HepG2 (cell line): ENCODE measurements at regions of chr14 and their contacts with region 1.

Region 1: DNA sequence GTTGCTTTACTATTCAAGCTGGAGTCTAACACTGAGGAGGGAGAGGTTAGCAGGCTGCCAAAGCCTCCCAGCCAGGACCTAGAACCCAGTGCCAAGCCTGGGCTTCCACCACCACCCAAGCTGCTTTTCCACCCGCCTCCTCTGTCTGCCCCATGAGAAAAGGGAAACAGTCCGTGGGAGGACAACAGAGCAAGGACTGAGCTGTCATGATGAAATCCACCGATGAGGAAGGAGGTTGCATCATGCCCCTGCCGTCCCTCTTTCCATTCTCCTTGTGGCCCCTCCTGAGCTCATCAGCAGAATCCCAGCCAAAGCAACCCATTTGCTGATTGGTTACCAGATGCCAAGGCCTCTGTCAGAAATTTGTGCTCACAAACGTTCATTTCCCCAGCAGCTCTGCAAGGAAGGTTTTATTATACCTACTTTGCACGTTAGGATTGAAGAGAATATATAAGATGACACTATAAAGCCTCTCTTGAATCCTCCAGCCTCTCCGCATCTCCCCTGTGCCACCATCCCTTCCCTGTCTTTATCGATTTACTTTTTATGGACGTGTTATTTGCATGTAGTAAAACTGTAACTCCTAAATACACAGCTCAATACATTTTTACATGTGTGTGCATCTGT is 6.3 kb upstream of the SERPINA1 start:
- DNase-seq: peak; percentile 74
- ATAC-seq: peak; percentile 6; the same call in 2 of the 3 replicates
- H3K4me3 ChIP-seq: peak overlapping the region; percentile 28 to 67 (median 35)
- H3K27ac ChIP-seq: peak overlapping the region; percentile 87
- H3K4me1 ChIP-seq: peaks cover 100% of the 10 kb centered on the region
- H3K27me3 ChIP-seq: no peaks in the 10 kb centered on the region
- CTCF ChIP-seq: no peak
- EP300 ChIP-seq: peak in 1 of 2 experiments; percentile 71; a peak in 2 of 4 replicates
- POLR2A ChIP-seq: peak in 1 of 2 experiments; percentile 55; a peak in 1 of 4 replicates
- RAD21 ChIP-seq: no peak

Region 2: GRCh38 chr14:93970549-93970946 is 424.1 kb before region 1 on chr14:
- CTCF ChIA-PET with region 1: no interaction called
- POLR2A ChIA-PET with region 1: no interaction called
- in situ Hi-C with region 1: no loop called
- intact Hi-C with region 1: no loop called
- DNase-seq: peak; percentile 52
- ATAC-seq: peak; percentile 90
- H3K4me3 ChIP-seq: 0 out of 6 replicates have a peak overlapping the region, but pooled peaks of 2 of the 3 experiments have one; percentile 9 to 57
- H3K27ac ChIP-seq: no peak overlapping the region
- H3K4me1 ChIP-seq: peaks cover 44% of the 10 kb centered on the region
- H3K27me3 ChIP-seq: peaks cover 7 to 40% of the 10 kb centered on the region in 2 experiments
- CTCF ChIP-seq: peak; percentile 88
- EP300 ChIP-seq: no peak
- POLR2A ChIP-seq: no peak
- RAD21 ChIP-seq: peak; percentile 85

Region 3: DNA sequence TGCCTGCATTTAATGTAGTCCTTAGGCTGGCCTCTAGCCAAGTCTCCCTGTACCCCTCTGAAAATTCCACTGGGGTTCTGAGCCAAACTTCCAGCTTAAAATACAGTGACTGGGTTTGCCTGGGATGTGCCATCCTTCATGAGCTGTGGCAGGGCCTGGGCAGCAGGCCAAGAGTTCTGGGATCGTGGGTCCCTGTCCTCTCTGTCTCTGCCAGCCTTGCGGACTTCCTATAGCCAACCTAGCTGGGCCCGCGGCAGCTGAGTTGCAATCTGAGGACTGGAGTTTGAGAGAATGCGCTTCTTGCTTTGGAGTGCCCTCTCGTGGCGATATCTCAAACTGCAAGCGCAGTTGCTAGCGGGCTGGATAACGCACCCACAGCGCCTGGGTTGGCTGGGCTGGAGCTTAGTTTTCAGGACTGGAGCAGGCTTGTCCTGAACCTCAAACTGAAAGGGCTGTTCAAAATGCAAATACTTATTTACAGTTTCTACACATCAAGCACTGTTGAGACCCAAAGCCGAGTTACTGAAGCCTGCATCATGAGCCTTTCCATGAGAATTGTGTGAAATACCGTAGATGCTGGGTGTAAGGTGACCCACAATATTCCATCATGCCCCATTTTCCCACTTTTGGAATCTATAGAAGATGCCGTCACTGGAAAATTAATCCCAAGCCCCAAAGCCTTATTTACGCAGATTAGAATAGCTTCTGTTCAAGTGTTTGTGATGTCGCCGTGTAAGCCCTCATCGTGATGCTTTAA is 257.9 kb before region 1 on chr14:
- CTCF ChIA-PET with region 1: no interaction called
- POLR2A ChIA-PET with region 1: no interaction called
- in situ Hi-C with region 1: no loop called
- intact Hi-C with region 1: no loop called
- DNase-seq: peak; percentile 80
- ATAC-seq: peak; percentile 93
- H3K4me3 ChIP-seq: peak overlapping the region in 2 of 3 experiments; percentile 19 to 48; a peak in 3 of 6 replicates
- H3K27ac ChIP-seq: no peak overlapping the region
- H3K4me1 ChIP-seq: peaks cover 27% of the 10 kb centered on the region
- H3K27me3 ChIP-seq: peaks cover 2 to 25% of the 10 kb centered on the region in 2 experiments; a peak in 4 of 5 replicates
- CTCF ChIP-seq: peak; percentile 98
- EP300 ChIP-seq: no peak
- POLR2A ChIP-seq: no peak
- RAD21 ChIP-seq: peak; percentile 95

Region 4: DNA sequence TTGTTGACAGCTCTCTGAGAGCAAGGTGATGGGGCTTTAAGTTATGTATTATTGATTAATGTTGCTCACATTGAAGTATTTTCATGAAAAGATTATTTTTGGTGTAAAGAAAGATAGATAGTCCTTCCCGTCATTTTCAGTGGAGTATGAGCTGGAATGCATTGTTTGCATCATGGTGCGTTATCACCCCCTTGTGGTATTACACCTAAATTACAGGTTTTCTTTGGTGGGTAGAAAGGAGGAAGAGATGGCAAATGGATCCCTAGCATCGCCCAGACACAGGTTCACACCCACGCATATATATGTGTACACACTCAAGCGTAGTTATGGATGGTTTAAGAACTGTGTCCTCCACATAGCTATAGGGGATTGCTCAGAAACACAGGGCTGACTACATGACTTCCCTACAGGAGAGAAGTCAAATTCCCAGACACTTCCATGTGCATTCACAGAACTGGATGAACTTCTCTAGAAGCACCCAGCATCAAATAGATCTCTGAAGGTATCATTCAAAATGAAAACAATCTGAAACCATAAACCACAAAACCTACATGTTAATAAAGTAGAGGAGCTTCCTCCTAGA is 87.2 kb before region 1 on chr14:
- CTCF ChIA-PET with region 1: no interaction called
- POLR2A ChIA-PET with region 1: no interaction called
- in situ Hi-C with region 1: no loop called
- intact Hi-C with region 1: no loop called
- DNase-seq: peak; percentile 50
- ATAC-seq: peak; percentile 65
- H3K4me3 ChIP-seq: no peak overlapping the region
- H3K27ac ChIP-seq: no peak overlapping the region
- H3K4me1 ChIP-seq: peaks cover 18% of the 10 kb centered on the region
- H3K27me3 ChIP-seq: no peaks in the 10 kb centered on the region
- CTCF ChIP-seq: peak; percentile 88
- EP300 ChIP-seq: no peak
- POLR2A ChIP-seq: no peak
- RAD21 ChIP-seq: peak; percentile 80

Region 5: DNA sequence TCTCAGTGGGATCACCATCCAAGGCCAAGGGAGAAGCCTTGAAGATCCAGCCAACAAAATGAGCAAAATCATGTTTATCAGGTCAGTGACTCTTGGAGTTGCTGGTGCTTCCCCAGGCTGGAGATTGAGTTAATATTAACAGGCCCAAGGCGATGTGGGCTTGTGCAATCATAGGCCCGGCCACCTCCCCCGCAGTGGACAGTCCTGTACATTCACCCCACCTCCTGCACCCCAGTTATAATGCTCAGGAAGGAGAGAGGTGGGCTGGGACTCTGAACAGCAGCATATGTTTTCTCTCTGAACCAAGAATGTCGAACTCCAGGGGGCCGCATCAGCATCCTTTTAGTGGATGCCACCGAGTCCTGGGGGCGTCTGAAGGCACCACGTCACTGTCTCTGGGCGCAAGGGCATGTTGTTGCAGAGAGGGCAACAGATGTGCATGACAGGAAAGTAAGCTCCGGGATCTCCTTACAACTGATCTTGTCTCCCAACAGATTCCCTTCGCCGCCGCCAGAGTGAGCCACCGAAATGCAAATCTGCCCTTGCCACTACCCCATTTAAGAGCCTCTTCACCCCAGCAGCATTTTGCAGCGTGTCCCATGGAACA is 39.4 kb before region 1 on chr14:
- CTCF ChIA-PET with region 1: no interaction called
- POLR2A ChIA-PET with region 1: interaction called, 32 read pairs
- in situ Hi-C with region 1: no loop called
- intact Hi-C with region 1: no loop called
- DNase-seq: peak; percentile 85
- ATAC-seq: peak; percentile 95
- H3K4me3 ChIP-seq: peak overlapping the region; percentile 40 to 65 (median 44); a peak in 5 of 6 replicates
- H3K27ac ChIP-seq: peak overlapping the region; percentile 63
- H3K4me1 ChIP-seq: peaks cover 61% of the 10 kb centered on the region
- H3K27me3 ChIP-seq: no peaks in the 10 kb centered on the region
- CTCF ChIP-seq: peak; percentile 88
- EP300 ChIP-seq: peak in 1 of 2 experiments; percentile 54; a peak in 2 of 4 replicates
- POLR2A ChIP-seq: peak in 1 of 2 experiments; percentile 34; a peak in 1 of 4 replicates
- RAD21 ChIP-seq: peak; percentile 80

Region 6: GRCh38 chr14:94405486-94405885 is 10.8 kb after region 1 on chr14:
- CTCF ChIA-PET with region 1: no interaction called
- POLR2A ChIA-PET with region 1: interaction called, 180 read pairs
- in situ Hi-C with region 1: no loop called
- intact Hi-C with region 1: no loop called
- DNase-seq: no peak
- ATAC-seq: no peak
- H3K4me3 ChIP-seq: no peak overlapping the region
- H3K27ac ChIP-seq: no peak overlapping the region
- H3K4me1 ChIP-seq: peaks cover 79% of the 10 kb centered on the region
- H3K27me3 ChIP-seq: no peaks in the 10 kb centered on the region
- CTCF ChIP-seq: no peak
- EP300 ChIP-seq: no peak
- POLR2A ChIP-seq: no peak
- RAD21 ChIP-seq: no peak

Region 7: DNA sequence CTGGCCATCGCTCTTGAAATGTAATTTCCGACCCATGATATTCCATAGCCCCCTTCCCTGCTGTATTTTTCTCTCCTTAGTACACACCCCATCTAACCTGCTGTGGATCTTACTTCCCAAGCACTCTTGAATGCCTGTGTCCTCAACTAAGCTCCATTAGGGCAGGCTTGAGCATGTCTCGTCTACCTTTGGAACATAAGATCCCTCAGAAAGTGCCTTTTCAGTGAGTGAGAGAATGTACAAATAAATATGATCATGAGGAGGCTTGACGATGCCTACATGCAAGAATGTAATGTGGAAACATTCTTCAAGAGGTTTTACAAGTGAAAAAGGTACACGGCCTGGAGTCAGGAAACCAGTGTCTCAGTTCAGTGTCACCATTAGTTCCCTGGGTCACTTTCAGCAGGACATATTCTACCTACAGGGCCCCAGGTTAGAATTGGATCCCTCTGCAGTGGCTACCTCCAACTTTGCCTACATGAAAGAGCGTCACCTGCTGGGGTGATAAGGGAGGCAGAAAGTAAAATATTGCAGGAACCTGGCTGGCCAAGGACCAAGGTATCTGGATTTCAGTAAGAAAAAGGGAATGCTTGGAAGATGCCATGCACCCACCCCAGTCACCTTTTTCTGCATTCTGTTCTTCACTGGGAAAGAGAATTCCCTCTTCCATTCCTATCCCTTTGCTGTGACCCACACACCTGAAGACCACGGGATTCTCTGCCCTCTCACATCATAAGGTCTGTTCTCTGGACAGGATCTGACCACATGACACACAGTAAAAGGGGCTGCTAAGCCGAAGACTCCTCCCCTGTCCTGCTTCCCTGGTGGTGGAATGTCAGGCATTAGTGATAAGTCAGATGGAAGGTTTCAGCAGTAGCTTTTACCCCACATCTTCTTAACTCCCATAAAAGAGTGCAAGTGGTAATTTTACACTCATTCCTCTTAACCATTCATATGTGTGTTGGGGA is 18.3 kb after region 1 on chr14:
- CTCF ChIA-PET with region 1: no interaction called
- POLR2A ChIA-PET with region 1: interaction called, 17 read pairs
- in situ Hi-C with region 1: no loop called
- intact Hi-C with region 1: no loop called
- DNase-seq: peak; percentile 70
- ATAC-seq: peak; percentile 90
- H3K4me3 ChIP-seq: peak overlapping the region in 1 of 3 experiments; percentile 9; a peak in 1 of 6 replicates
- H3K27ac ChIP-seq: peak overlapping the region; percentile 48
- H3K4me1 ChIP-seq: peaks cover 77% of the 10 kb centered on the region
- H3K27me3 ChIP-seq: no peaks in the 10 kb centered on the region
- CTCF ChIP-seq: peak; percentile 94
- EP300 ChIP-seq: no peak
- POLR2A ChIP-seq: no peak
- RAD21 ChIP-seq: peak; percentile 92